ENCODE measurements at regions of chr7 and their contacts with region 1.

Region 1: GRCh38 chr7:35906191-35906908 is 105.5 kb downstream of the SEPTIN7 start:
- DNase-seq: peak in 3 of 6 donors; percentile 24 to 67 (median 32)
- ATAC-seq: peak; percentile 89 to 99 (median 95)
- H3K4me3 ChIP-seq: no peak overlapping the region
- H3K27ac ChIP-seq: no peak overlapping the region
- H3K4me1 ChIP-seq: no peaks in the 10 kb centered on the region
- H3K27me3 ChIP-seq: no peaks in the 10 kb centered on the region
- CTCF ChIP-seq: peak; percentile 76 to 90 (median 84)

Region 2: DNA sequence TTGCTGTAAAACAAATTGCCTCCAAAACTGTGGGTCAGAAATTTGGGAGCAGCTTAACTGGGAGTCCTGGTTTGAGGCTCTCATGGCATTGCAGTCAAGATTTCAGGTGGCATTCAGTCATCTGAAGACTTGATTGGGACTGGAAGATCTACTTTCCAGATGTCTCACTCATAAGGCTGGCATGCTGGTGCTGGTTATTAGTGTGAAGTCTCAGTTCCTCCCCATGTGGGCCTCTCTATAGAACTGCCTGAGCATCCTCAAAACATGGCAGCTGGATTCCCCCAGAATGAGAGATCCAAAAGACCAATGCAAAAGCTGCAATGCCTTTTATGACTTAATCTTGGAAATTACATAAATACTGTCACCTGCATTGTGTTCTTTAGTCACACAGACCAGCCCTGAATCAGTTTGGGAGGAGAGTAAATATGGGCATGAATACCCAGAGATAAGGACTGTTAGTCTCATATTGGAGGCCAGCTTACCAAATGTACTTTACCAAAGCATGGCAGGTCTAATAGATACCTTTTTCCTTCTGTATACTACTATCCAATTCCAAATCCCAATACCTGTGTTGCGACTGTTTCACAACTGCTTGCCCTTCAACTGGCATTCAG is 205.0 kb before region 1 on chr7:
- intact Hi-C with region 1: loop called in 1 of 3 experiments (anchors 10 kb)
- DNase-seq: no peak
- ATAC-seq: peak in 1 of 4 donors; percentile 35
- H3K4me3 ChIP-seq: no peak overlapping the region
- H3K27ac ChIP-seq: no peak overlapping the region
- H3K4me1 ChIP-seq: no peaks in the 10 kb centered on the region
- H3K27me3 ChIP-seq: no peaks in the 10 kb centered on the region
- CTCF ChIP-seq: no peak

Region 3: GRCh38 chr7:35714862-35715261 is 191.5 kb before region 1 on chr7:
- intact Hi-C with region 1: loop called in 2 of 3 experiments (anchors 5 kb)
- DNase-seq: no peak
- ATAC-seq: no peak
- H3K4me3 ChIP-seq: no peak overlapping the region
- H3K27ac ChIP-seq: no peak overlapping the region
- H3K4me1 ChIP-seq: peaks cover 0 to 10% (median 10%) of the 10 kb centered on the region in 3 donors
- H3K27me3 ChIP-seq: no peaks in the 10 kb centered on the region
- CTCF ChIP-seq: no peak

Measured in pancreas (tissue), 10 donors.